ENCODE measurements at regions of chr1 and their contacts with region 1.

Region 1: DNA sequence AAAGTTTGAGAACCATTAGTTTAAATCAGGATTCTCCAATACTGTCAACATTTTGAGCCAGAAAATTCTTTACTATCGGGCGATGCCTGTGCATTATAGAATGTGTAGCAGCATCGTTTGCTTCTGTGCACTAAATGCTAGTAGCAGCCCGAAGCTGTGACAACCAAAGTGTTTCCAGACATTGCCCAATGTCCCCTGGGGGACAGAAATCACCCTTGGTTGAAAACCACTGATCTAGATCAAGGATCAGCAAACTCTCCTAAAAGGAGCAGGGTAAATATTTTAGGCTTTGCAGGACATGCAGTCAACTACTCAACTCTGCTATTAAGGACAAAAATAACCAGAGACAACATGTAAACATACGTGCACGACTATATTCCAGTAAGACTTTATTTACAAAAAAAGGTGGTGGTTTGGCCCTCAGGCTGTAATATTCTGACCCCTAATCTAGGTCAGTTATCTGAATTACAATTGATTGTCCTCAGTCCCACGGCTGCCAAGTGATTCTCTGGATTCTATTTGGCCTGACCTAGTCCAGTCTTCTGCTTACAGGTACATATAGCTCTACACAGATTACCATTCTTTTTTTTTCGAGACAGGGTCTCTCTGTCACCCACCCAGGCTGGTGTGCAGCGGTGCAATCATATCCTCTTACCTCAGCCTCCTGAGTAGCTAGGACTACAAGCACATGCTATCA is 10.6 kb downstream of the FAF1 start:
- DNase-seq: no peak
- ATAC-seq: no peak
- H3K4me3 Mint-ChIP-seq: no peak overlapping the region
- H3K27ac Mint-ChIP-seq: no peak overlapping the region
- H3K4me1 Mint-ChIP-seq: peaks cover 44% of the 10 kb centered on the region
- H3K27me3 Mint-ChIP-seq: no peaks in the 10 kb centered on the region
- CTCF ChIP-seq: no peak

Region 2: GRCh38 chr1:50774759-50775351 is 174.6 kb before region 1 on chr1:
- CTCF ChIA-PET with region 1: no interaction called
- POLR2A ChIA-PET with region 1: no interaction called
- intact Hi-C with region 1: loop called (anchors 10 kb)
- DNase-seq: no peak
- ATAC-seq: no peak
- H3K4me3 Mint-ChIP-seq: no peak overlapping the region
- H3K27ac Mint-ChIP-seq: no peak overlapping the region
- H3K4me1 Mint-ChIP-seq: no peaks in the 10 kb centered on the region
- H3K27me3 Mint-ChIP-seq: no peaks in the 10 kb centered on the region
- CTCF ChIP-seq: peak; percentile 78

Measured in activated CD8-positive, alpha-beta T cell treated with anti-CD3 and anti-CD28 coated beads for 36 hours (primary cell).